Activated CD8-positive, alpha-beta memory T cell treated with anti-CD3 and anti-CD28 coated beads, Interleukin-2, amount 10 ng/mL, durations not matched to agents 7 days and 5 days (primary cell): ENCODE measurements at regions of chr3 and their contacts with region 1.

Region 1: DNA sequence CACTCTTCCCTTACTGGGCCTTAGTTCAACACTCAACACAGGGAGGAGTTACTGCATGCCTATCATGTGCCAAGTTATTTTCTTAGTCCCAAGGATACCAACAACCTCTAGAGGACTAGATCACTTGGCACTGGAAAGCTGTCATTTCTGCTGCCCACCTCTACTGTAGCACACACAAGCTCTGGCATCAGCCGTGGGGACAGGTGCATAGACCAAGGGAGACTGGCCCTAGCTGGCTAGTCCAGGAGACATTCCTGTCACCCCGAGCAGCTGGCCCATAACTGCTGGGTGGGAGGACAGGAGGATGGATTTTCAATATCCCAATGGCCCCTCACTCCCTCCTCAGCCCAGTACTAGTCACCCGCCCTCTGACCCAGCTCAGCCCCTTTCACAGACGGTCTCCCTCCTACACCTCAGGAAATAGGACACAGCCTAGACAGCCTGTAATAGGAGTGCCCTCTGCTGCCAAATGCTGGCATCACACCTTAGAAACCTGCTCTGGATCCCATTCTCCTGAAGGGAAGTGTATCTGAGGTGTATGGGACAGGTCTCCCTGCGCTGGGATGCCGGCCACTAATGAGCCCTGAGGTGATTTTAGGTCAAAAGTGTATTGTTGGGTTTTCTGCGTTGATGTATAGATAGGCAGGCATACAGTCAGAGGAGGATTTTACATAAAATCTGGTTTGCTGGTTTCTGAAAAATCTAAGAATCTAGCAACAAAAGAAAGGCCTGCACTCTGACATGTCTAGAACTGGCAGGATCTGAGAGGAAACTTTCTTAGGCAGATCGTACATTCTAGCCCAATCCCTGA is 3.4 kb upstream of the DZIP1L start:
- DNase-seq: peak; percentile 69
- ATAC-seq: peak; percentile 64
- H3K4me3 Mint-ChIP-seq: no peak overlapping the region
- H3K27ac Mint-ChIP-seq: no peak overlapping the region
- H3K4me1 Mint-ChIP-seq: peaks cover 6% of the 10 kb centered on the region
- H3K27me3 Mint-ChIP-seq: peaks cover 57% of the 10 kb centered on the region

Region 2: GRCh38 chr3:138068579-138069174 is 50.1 kb before region 1 on chr3:
- CTCF ChIA-PET with region 1: interaction called, 44 read pairs
- DNase-seq: peak; percentile 83
- ATAC-seq: peak; percentile 53
- H3K4me3 Mint-ChIP-seq: no peak overlapping the region
- H3K27ac Mint-ChIP-seq: no peak overlapping the region
- H3K4me1 Mint-ChIP-seq: peaks cover 33% of the 10 kb centered on the region
- H3K27me3 Mint-ChIP-seq: peaks cover 38% of the 10 kb centered on the region

Region 3: GRCh38 chr3:138082085-138082991 is 36.5 kb before region 1 on chr3:
- CTCF ChIA-PET with region 1: interaction called, 20 read pairs
- DNase-seq: peak; percentile 58
- ATAC-seq: peak; percentile 77
- H3K4me3 Mint-ChIP-seq: peak overlapping the region; percentile 70
- H3K27ac Mint-ChIP-seq: peak overlapping the region; percentile 85
- H3K4me1 Mint-ChIP-seq: peaks cover 34% of the 10 kb centered on the region
- H3K27me3 Mint-ChIP-seq: peaks cover 21% of the 10 kb centered on the region

Region 4: GRCh38 chr3:138539352-138539751 is 420.5 kb after region 1 on chr3:
- CTCF ChIA-PET with region 1: no interaction called
- DNase-seq: no peak
- ATAC-seq: no peak
- H3K4me3 Mint-ChIP-seq: no peak overlapping the region
- H3K27ac Mint-ChIP-seq: no peak overlapping the region
- H3K4me1 Mint-ChIP-seq: no peaks in the 10 kb centered on the region
- H3K27me3 Mint-ChIP-seq: no peaks in the 10 kb centered on the region